ENCODE measurements at regions of chr11 and their contacts with region 1.

Region 1: DNA sequence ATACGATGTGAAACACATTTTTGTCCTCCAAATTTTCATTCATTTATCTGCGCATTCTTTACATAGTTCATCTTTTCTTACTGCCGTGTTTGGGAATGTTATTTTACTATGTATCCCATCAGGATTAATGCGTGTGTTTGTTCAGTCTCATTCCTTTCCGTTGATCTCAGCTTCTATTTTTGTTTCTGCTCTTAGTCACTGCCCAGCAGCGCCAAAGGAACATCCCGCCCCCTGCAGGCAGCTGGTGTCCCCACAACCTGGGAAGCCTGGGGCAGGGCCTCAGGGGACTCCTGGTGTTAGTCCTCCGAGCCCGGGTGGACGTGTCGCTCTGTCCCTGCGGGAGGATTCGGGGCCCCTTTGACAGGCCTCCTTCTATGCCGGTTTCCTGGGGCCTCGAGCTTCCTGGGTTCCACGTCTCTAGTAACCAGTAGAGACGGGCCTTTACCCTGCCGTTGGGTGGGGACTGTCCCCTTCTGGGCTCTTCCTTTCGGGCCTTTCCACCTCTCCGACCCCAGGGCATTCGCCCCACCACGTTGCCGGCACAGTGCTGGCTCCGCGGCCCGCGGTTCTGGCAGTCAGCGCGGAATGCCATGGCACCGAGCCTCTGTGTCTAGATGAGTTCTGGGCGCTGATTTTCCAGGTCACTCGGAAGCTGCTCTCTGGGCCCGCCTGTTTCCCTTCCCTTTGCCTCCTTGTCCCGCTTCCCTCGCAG is 39.8 kb downstream of the WEE1 start:
- DNase-seq: peak; percentile 63 to 88 (median 77)
- ATAC-seq: peak; percentile 53 to 68 (median 64)
- H3K4me3 ChIP-seq: peak overlapping the region; percentile 61 to 87
- H3K4me3 Mint-ChIP-seq: peak overlapping the region; percentile 94 to 95 (median 94)
- H3K27ac ChIP-seq: peak overlapping the region; percentile 81
- H3K27ac Mint-ChIP-seq: peak overlapping the region; percentile 83 to 99
- H3K4me1 ChIP-seq: peaks cover 3 to 12% of the 10 kb centered on the region in 2 experiments
- H3K4me1 Mint-ChIP-seq: peaks cover 16 to 25% (median 21%) of the 10 kb centered on the region in 3 donors
- H3K27me3 ChIP-seq: no peaks in the 10 kb centered on the region
- H3K27me3 Mint-ChIP-seq: no peaks in the 10 kb centered on the region

Region 2: GRCh38 chr11:9039194-9039593 is 574.1 kb before region 1 on chr11:
- CTCF ChIA-PET with region 1: no interaction called
- POLR2A ChIA-PET with region 1: no interaction called
- DNase-seq: no peak
- ATAC-seq: no peak
- H3K4me3 ChIP-seq: no peak overlapping the region
- H3K4me3 Mint-ChIP-seq: no peak overlapping the region
- H3K27ac ChIP-seq: no peak overlapping the region
- H3K27ac Mint-ChIP-seq: no peak overlapping the region
- H3K4me1 ChIP-seq: no peaks in the 10 kb centered on the region
- H3K4me1 Mint-ChIP-seq: no peaks in the 10 kb centered on the region
- H3K27me3 ChIP-seq: peaks cover 0 to 6% of the 10 kb centered on the region in 2 experiments
- H3K27me3 Mint-ChIP-seq: peaks cover 10 to 16% of the 10 kb centered on the region in 2 donors

Region 3: DNA sequence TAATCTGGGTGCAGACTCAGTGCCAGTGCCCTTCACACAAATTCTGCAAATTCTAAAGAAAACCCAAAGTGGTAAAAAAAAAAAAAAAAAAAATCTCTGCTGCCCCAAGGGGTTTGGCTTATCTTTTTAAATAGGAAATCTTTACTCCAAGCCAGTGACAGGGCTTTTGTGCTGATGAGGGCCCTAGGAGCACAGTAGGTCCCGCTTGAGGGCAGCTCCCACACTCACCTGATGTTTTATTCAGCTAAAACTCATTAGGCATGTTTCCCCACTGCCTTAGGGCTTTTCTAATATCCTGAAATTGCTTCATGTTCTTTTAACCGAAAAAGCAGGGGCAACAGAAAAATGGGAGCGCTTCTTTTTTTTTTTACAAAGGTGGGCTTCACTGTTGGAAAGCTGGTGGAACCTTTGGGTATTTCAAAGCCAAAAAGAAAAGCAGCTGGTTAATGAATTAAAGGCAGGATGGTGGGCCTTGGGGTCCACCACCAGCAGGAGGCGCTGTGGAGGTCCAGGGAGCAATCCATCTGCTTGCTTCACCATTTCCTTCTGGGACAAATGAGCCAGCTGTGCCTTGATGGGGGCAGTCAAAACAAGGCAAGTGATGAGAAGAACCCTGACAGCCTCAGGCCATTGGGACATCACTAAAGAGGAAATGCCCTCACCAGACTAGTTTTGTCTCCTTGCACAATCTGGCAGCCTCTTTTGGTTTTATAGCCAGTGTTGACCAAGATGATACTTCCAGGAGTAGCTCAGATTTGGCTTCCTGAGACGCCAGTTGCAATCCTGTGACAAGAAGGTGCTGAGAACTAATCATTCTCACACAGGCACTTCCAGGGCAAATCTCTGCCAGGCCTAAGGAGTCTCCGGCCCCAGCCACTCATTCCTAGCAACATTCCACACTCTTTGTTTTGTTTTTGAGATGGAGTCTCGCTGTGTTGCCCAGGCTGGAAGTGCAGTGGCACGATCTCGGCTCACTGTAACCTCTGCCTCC is 78.2 kb before region 1 on chr11:
- CTCF ChIA-PET with region 1: interaction called, 13 to 63 read pairs
- POLR2A ChIA-PET with region 1: interaction called in 1 of 2 experiments, 7 read pairs
- DNase-seq: peak; percentile 13 to 85 (median 67)
- ATAC-seq: peak; percentile 34 to 65 (median 55)
- H3K4me3 ChIP-seq: no peak overlapping the region
- H3K4me3 Mint-ChIP-seq: no peak overlapping the region
- H3K27ac ChIP-seq: no peak overlapping the region
- H3K27ac Mint-ChIP-seq: no peak overlapping the region
- H3K4me1 ChIP-seq: no peaks in the 10 kb centered on the region
- H3K4me1 Mint-ChIP-seq: no peaks in the 10 kb centered on the region
- H3K27me3 ChIP-seq: no peaks in the 10 kb centered on the region
- H3K27me3 Mint-ChIP-seq: no peaks in the 10 kb centered on the region

Region 4: DNA sequence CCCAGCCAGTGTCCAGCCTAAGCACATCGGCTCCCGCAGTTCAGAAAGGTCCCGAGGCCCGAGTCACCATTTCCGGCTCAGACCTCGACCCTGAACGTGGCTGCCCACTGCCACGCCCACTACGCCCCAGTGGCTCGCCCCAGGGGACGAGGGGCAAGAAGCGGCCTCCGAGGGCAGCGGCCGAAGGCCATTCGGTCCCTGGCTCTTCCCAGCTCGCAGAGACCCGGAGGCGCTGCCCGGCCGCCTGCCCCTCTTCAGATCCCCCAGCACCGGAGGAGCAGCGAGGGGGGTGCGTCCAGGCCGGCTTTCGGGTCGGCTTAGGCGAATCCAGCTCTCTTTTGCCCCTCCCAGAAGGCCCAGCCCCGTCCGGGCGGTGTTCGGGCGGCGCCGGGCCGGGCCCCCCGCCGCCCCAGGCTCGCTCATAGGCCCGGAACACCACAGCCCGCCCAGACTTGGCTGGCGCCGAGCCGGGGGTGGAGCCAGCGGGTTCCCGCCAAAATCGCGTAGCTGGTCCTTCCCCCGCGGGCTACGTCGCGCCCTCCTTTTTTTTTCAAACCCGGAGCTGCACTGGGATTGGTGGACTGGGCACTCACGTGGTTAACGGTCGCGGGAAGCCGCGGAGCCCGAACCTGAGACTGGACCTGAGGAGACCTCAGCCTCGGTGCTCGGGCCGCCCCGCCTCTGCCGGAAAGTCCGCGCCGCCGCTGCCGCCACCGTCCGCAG is 40.1 kb before region 1 on chr11 and contains the start of gene WEE1:
- CTCF ChIA-PET with region 1: interaction called, 3 to 34 read pairs
- POLR2A ChIA-PET with region 1: interaction called in 1 of 2 experiments, 3 read pairs
- DNase-seq: peak; percentile 80 to 96 (median 89)
- ATAC-seq: peak; percentile 92 to 94 (median 94)
- H3K4me3 ChIP-seq: peak within 1 kb of the TSS; percentile 59 to 97
- H3K4me3 Mint-ChIP-seq: peak within 1 kb of the TSS; percentile 83 to 89 (median 87)
- H3K27ac ChIP-seq: peak within 1 kb of the TSS; percentile 64
- H3K27ac Mint-ChIP-seq: peak within 1 kb of the TSS; percentile 68 to 88
- H3K4me1 ChIP-seq: peaks cover 23 to 27% of the 10 kb centered on the region in 2 experiments
- H3K4me1 Mint-ChIP-seq: peaks cover 20 to 51% (median 37%) of the 10 kb centered on the region in 3 donors
- H3K27me3 ChIP-seq: peaks cover 0 to 17% of the 10 kb centered on the region in 2 experiments
- H3K27me3 Mint-ChIP-seq: peaks cover 6 to 13% of the 10 kb centered on the region in 2 donors
- total RNA-seq, gene WEE1: 3.8 to 13.5 (median 6.2) TPM

Region 5: GRCh38 chr11:9601037-9601875 is 12.0 kb before region 1 on chr11:
- CTCF ChIA-PET with region 1: interaction called, 7 to 39 read pairs
- POLR2A ChIA-PET with region 1: interaction called, 3 to 7 read pairs
- DNase-seq: peak; percentile 6 to 84 (median 40)
- ATAC-seq: peak; percentile 82 to 95 (median 94)
- H3K4me3 ChIP-seq: peak overlapping the region; percentile 25 to 49
- H3K4me3 Mint-ChIP-seq: peak overlapping the region; percentile 37 to 80 (median 72)
- H3K27ac ChIP-seq: peak overlapping the region; percentile 72
- H3K27ac Mint-ChIP-seq: peak overlapping the region; percentile 85 to 96
- H3K4me1 ChIP-seq: peaks cover 3 to 26% of the 10 kb centered on the region in 2 experiments
- H3K4me1 Mint-ChIP-seq: peaks cover 19 to 26% (median 25%) of the 10 kb centered on the region in 3 donors
- H3K27me3 ChIP-seq: no peaks in the 10 kb centered on the region
- H3K27me3 Mint-ChIP-seq: no peaks in the 10 kb centered on the region

Measured in T-cell (primary cell).